Mammary epithelial cell (primary cell): ENCODE measurements at regions of chr7 and their contacts with region 1.

Region 1: DNA sequence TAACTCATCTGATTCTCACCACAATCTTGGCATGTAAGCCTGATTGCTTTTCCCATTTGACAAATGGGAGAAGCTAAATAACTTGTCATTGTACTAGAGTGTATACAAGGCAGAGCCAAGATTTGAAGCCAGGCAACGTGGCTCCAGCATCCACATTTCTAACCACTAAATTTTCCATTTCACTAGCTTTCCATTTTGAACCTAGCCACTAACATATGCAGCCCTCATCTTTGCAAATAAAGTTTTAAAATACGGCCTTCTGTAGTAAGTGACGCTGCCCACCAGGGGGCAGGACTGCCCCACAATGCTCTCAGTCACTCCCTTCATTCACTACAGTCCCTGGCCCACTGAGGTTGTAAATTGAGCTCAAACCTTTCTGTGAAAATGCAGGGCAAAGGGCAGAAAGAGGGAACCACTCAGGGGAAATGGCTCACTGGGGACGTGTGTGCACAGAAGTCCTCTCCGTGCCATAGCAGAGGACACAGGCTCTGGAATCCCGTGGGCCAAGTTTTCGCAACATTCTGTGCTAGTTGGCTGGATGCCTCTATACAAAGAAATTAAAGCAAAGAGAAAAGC is 315.7 kb downstream of the TNS3 start:
- DNase-seq: peak; percentile 33
- H3K4me3 ChIP-seq: no peak overlapping the region
- H3K27ac ChIP-seq: no peak overlapping the region
- H3K4me1 ChIP-seq: peaks cover 2% of the 10 kb centered on the region
- H3K27me3 ChIP-seq: no peaks in the 10 kb centered on the region
- CTCF ChIP-seq: peak; percentile 92 to 96

Region 2: GRCh38 chr7:46512891-46513645 is 753.2 kb before region 1 on chr7:
- CTCF ChIA-PET with region 1: no interaction called
- dilution Hi-C with region 1: no loop called
- in situ Hi-C with region 1: no loop called
- intact Hi-C with region 1: no loop called
- DNase-seq: no peak
- H3K4me3 ChIP-seq: no peak overlapping the region
- H3K27ac ChIP-seq: no peak overlapping the region
- H3K4me1 ChIP-seq: peaks cover 11% of the 10 kb centered on the region
- H3K27me3 ChIP-seq: no peaks in the 10 kb centered on the region
- CTCF ChIP-seq: no peak

Region 3: DNA sequence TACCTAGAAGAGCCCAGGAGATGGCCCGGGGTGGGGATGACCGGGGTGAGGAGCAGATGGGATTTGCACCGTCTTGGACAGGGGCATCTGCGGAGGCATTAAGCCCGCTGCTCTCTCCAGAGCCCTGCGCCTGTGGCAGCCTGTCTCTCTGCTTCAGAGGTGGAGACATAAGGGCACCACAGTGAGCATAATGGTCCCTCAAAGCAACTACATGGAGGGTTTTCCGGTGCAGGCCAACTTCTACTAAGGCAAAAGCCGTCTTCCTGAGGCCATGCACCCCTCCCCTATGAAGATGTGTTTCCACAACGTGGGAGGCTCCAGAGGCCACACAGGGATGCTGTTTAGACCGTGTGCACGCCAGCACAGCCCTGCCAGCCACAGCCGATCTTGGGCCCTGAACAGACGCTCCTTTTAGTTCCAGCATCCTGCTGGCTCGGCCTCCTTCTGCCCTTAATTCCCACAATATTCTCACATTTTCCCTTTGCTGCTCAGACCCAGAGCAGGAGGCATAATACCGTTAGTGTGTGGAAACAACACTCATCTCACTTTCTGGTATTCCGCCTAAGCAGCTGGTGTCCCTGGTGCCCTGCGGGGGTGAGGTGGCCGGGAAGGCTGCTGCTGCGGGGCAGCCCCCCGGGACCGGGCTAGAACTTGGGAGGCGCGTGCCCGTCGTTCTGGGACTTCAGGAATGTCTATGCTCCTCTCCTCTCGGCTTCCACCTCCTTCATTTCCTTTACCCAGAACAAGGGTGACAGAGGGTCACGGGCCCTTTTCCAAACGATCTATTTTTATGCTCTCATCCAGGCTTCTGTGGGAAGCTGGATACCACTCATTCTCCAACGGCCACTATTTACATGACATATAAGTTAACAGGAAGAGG is 48.7 kb after region 1 on chr7:
- CTCF ChIA-PET with region 1: no interaction called
- dilution Hi-C with region 1: loop called (anchors 5 kb)
- in situ Hi-C with region 1: no loop called
- intact Hi-C with region 1: no loop called
- DNase-seq: no peak
- H3K4me3 ChIP-seq: no peak overlapping the region
- H3K27ac ChIP-seq: no peak overlapping the region
- H3K4me1 ChIP-seq: no peaks in the 10 kb centered on the region
- H3K27me3 ChIP-seq: no peaks in the 10 kb centered on the region
- CTCF ChIP-seq: no peak

Region 4: DNA sequence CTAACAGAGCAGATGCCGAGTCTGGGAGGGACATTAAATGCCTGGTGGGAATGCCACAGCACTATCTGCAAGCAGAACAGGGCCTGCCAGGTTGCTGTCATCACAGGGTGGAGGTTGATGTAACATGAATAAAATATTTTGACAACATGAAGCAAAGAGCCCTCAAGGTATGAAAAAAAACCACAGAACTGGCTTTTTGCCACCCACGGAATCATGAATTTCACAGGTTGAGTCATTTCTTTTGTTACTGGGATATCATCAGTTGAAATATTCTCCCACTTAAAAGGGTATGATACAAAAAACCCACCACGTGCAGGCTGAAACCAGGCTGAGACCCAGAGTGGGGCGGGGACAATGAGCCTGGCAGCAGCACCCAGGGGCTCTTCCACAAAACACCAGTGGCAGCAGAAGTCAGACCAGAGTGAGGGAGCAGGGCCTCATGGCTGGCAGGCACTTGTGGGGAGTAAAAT is 95.6 kb after region 1 on chr7:
- CTCF ChIA-PET with region 1: no interaction called
- dilution Hi-C with region 1: loop called (anchors 5 kb)
- in situ Hi-C with region 1: no loop called
- intact Hi-C with region 1: no loop called
- DNase-seq: peak; percentile 96
- H3K4me3 ChIP-seq: no peak overlapping the region
- H3K27ac ChIP-seq: peak overlapping the region; percentile 31
- H3K4me1 ChIP-seq: peaks cover 20% of the 10 kb centered on the region
- H3K27me3 ChIP-seq: no peaks in the 10 kb centered on the region
- CTCF ChIP-seq: no peak

Region 5: DNA sequence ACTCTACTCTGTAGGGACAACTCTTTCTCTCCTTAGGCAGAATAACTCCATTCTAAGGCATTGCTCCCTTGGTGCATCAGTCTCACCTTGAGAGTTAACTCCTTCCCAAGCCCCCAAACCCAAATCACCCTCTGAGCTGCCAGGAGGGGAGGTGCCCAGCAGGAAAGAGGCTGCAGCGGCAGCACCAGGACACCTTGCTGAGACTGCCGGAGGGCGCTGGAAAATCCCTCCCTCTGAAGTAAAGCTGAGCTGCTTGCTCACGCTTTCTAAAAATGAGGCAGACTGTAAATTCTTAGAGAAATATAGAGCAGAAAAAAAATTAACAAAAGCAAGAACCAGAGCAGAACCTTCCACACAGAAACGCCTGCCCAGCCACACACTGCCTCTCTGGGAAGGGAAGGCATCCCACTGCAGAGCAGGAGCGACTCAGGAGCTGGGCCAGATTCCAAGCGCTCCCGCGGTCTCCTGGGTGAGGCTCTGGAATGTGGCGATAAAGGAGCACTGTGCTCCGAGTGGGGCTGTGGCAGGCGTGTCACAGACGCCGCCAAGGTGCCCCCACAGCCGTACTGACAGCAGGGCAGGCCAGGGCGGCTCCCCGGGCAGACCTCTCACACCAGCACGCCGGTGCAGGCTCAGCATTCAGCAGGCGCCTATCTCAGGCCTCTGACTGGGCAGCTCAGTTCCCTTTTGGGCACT is 113.6 kb after region 1 on chr7:
- CTCF ChIA-PET with region 1: no interaction called
- dilution Hi-C with region 1: no loop called
- in situ Hi-C with region 1: no loop called
- intact Hi-C with region 1: no loop called
- DNase-seq: peak; percentile 62
- H3K4me3 ChIP-seq: no peak overlapping the region
- H3K27ac ChIP-seq: no peak overlapping the region
- H3K4me1 ChIP-seq: peaks cover 30% of the 10 kb centered on the region
- H3K27me3 ChIP-seq: no peaks in the 10 kb centered on the region
- CTCF ChIP-seq: no peak

Region 6: DNA sequence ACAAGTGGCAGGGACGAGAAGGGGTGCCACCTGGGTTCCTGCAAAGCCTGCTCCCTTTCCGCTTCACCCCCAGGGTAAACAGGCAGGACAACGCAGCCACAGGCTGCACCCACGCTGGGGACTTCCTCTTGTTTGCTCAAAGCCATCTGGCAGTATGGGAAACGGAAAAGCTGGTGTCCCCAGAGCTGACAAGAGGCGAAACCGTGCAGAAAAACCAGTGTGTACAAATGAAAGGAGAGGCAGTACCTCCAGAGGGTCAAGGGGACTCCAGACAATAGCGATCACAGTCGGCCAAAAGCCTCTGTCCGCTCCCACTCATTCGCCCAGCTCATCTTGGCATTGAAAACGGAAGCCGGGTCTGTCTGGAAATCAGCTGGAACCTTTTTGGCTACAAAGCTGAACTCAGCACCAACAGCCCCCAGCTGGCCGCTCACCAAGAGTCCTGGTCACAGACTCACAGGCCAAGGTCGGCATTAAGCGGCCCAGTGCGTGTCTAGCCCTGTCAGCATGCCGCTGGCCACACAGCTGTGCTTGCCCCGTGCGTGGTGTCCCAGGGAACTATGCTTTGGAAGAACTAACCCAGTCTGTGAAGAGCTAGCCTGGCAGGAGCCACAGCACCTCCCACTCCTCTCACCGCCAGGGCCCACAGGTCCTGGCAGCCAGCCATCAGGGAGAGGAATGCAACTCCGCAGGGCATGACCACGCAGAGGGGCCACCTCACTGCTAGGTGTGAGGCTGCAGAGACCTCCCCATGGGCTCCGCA is 305.3 kb after region 1 on chr7:
- CTCF ChIA-PET with region 1: no interaction called
- dilution Hi-C with region 1: no loop called
- in situ Hi-C with region 1: no loop called
- intact Hi-C with region 1: loop called (anchors 5 kb)
- DNase-seq: peak; percentile 61
- H3K4me3 ChIP-seq: peak overlapping the region in 1 of 3 experiments; percentile 23
- H3K27ac ChIP-seq: no peak overlapping the region
- H3K4me1 ChIP-seq: peaks cover 47% of the 10 kb centered on the region
- H3K27me3 ChIP-seq: no peaks in the 10 kb centered on the region
- CTCF ChIP-seq: peak in 1 of 2 donors; percentile 5

Region 7: DNA sequence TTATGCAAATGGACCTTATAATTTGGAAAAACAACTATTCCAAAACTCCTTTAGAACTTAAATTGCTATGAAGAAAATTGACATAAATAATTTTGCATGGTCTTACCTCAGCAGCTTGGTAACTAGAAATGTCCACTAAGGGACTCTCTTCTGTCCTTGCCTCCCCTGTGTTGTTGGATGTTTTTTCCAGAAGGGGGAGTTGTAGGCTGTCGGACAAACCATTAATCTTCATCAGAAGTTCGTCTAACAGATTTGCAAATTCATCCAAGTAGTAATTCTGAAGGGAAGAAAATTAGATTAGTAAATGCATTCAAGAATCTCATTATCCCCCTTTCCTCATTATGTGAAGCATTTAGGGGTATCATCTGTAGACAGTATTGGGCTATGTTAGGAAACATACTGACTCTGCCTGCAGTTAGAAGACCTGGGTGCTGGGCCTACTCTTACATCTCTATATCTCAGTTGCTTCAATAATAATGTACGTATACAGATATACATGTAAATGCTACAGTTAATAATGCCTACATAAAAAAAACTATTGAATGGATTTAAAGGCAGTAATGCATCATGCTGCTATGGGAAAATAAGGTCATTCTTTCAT is 526.4 kb after region 1 on chr7:
- CTCF ChIA-PET with region 1: no interaction called
- dilution Hi-C with region 1: no loop called
- in situ Hi-C with region 1: no loop called
- intact Hi-C with region 1: loop called (anchors 1 kb)
- DNase-seq: no peak
- H3K4me3 ChIP-seq: no peak overlapping the region
- H3K27ac ChIP-seq: no peak overlapping the region
- H3K4me1 ChIP-seq: peaks cover 4% of the 10 kb centered on the region
- H3K27me3 ChIP-seq: no peaks in the 10 kb centered on the region
- CTCF ChIP-seq: peak; percentile 41 to 55

Region 8: DNA sequence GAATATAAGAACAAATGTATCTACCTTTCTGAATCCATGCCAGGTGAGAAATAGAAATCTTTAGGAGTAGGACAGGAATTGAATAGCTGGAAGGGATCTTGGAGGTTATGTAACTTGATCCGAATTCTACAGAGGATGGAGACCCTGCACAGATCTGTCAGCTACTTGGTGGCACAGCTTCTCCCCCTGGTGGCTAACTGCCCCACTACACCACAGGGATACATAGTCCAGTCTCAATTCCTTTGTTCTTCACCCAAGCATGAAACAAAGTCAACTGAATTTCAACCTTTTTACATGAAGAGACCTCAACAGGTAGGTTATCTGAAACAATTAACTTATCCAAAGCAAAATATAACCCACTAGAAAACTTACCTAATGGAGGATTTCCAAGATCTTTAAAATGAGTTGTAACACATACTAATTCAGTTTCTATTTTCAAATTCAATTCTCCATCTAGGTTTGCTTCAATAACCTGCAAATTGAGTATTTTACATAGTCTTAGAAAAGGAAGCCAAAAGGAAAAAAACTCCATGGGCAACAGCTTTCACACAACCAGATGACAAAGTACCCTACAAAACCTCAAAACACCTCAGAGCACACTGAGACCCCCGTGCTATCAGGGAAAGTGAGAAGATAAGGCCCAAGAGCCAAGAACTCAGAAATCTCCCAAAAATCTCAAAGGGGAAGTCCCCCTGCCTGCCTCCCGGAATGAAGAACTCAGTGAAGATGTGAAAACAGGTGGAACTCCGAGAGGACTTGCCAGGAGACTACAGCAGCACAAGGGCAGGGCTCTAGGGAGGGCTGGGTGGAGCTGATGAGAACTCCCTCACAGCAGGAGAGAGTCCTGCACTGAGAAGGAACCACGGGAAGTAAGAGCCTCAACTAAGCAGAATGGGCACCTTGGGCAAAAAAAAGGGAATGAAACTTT is 702.9 kb after region 1 on chr7:
- CTCF ChIA-PET with region 1: no interaction called
- dilution Hi-C with region 1: no loop called
- in situ Hi-C with region 1: no loop called
- intact Hi-C with region 1: loop called (anchors 5 kb)
- DNase-seq: no peak
- H3K4me3 ChIP-seq: no peak overlapping the region
- H3K27ac ChIP-seq: no peak overlapping the region
- H3K4me1 ChIP-seq: no peaks in the 10 kb centered on the region
- H3K27me3 ChIP-seq: no peaks in the 10 kb centered on the region
- CTCF ChIP-seq: peak; percentile 86 to 94